ENCODE measurements at regions of chr5 and their contacts with region 1.

Region 1: GRCh38 chr5:34915139-34915855 is at the starts of genes BRIX1 and RAD1:
- DNase-seq: peak; percentile 92
- ATAC-seq: peak; percentile 99
- H3K4me3 ChIP-seq: peak within 1 kb of the TSS; percentile 83 to 99 (median 95)
- H3K27ac ChIP-seq: peak within 1 kb of the TSS; percentile 89
- H3K4me1 ChIP-seq: peaks cover 39% of the 10 kb centered on the region
- H3K27me3 ChIP-seq: no peaks in the 10 kb centered on the region; a peak in 1 of 5 replicates
- CTCF ChIP-seq: peak; percentile 54
- EP300 ChIP-seq: no peak; a peak in 1 of 4 replicates
- POLR2A ChIP-seq: peak; percentile 80 to 86
- RAD21 ChIP-seq: no peak
- total RNA-seq, gene BRIX1: 78.4 and 114 TPM in 2 replicates
- total RNA-seq, gene RAD1: 39.1 and 51.0 TPM in 2 replicates

Region 2: DNA sequence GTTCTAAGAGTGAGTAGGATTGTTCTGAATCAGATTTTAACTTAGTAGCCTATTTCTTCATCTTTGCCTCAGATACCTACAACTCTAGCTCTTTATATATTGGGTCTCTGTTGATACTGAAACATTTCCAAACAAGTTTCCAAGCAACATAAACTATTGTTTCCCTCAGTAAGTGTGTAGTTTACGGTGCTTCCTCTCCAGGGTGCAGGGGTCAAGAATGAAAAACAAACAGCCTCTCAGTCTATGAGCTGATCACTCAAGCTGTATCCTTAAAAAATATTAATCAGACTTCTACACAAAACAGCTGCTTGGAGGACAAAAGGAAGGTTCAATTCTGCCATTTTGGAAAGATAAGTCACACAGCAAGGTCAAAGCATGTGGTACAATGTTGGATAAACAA is 1098.5 kb before region 1 on chr5:
- CTCF ChIA-PET with region 1: no interaction called
- POLR2A ChIA-PET with region 1: no interaction called
- in situ Hi-C with region 1: no loop called
- intact Hi-C with region 1: no loop called
- DNase-seq: no peak
- ATAC-seq: no peak
- H3K4me3 ChIP-seq: no peak overlapping the region
- H3K27ac ChIP-seq: no peak overlapping the region
- H3K4me1 ChIP-seq: no peaks in the 10 kb centered on the region
- H3K27me3 ChIP-seq: no peaks in the 10 kb centered on the region
- CTCF ChIP-seq: no peak
- EP300 ChIP-seq: no peak
- POLR2A ChIP-seq: no peak
- RAD21 ChIP-seq: no peak

Region 3: DNA sequence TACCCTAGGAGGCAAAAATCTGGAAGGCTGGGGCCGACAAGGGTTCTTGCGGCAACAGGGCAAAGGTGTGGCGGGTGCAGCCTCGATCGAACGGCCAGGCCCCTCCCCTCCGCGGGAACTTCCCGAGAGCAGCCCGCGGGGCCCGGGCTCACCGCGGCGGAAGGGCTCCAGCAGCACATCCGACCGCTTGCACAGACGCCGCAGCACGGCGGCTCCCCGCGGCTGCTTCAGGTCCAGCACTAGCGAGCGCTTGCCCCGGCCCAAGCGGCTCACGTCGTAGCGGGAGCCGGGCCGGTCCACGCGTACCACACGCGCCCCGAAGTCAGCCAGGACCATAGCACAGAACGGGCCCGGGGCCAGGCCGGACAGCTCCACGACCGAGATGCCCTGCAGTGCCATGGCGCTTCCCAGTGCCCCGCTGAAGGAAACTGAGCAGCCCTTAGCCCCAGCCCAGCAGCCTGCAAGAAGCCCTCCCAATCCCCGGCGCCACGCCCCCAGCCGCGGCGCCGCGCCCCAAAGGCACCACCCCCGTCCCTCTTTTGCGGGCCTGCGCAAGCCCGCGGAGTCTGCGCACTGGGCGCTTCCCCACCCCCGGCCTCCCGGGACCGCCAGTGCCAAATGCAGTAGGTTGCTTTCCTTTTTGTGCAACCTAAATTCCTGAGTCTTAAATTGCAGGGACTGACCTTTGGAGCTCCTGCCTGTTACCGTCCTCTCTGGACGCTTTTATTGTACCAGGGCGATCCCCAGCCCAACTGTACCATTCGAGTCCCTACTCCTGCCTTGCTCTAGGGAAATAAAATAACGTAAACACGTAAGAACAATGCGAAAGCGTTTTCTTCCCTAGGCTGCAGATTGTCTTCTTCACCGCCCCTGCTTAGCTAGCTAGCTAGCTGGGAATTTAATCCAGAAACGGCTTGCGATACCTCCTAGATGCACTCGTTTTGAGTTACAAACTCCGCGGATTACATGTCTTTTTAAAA is 907.4 kb before region 1 on chr5 and contains the start of gene AMACR:
- CTCF ChIA-PET with region 1: no interaction called
- POLR2A ChIA-PET with region 1: no interaction called
- in situ Hi-C with region 1: no loop called
- intact Hi-C with region 1: loop called (anchors 2 kb)
- DNase-seq: peak; percentile 95
- ATAC-seq: peak; percentile 92
- H3K4me3 ChIP-seq: peak within 1 kb of the TSS; percentile 78 to 87 (median 86)
- H3K27ac ChIP-seq: peak within 1 kb of the TSS; percentile 99
- H3K4me1 ChIP-seq: peaks cover 51% of the 10 kb centered on the region
- H3K27me3 ChIP-seq: no peaks in the 10 kb centered on the region; a peak in 1 of 5 replicates
- CTCF ChIP-seq: peak; percentile 39
- EP300 ChIP-seq: peak in 1 of 2 experiments; percentile 61; a peak in 2 of 4 replicates
- POLR2A ChIP-seq: peak; percentile 94 to 98
- RAD21 ChIP-seq: peak; percentile 67
- total RNA-seq, gene AMACR: 19.7 and 27.7 TPM in 2 replicates

Region 4: GRCh38 chr5:34656001-34656699 is 259.1 kb before region 1 on chr5 and contains the start of gene RAI14:
- CTCF ChIA-PET with region 1: no interaction called
- POLR2A ChIA-PET with region 1: interaction called, 4 read pairs
- in situ Hi-C with region 1: no loop called
- intact Hi-C with region 1: loop called (anchors 5 kb)
- DNase-seq: peak; percentile 41
- ATAC-seq: peak; percentile 85
- H3K4me3 ChIP-seq: peak within 1 kb of the TSS; percentile 85 to 88 (median 87)
- H3K27ac ChIP-seq: peak within 1 kb of the TSS; percentile 44
- H3K4me1 ChIP-seq: peaks cover 25% of the 10 kb centered on the region
- H3K27me3 ChIP-seq: peaks cover 1 to 4% of the 10 kb centered on the region in 2 experiments; a peak in 3 of 5 replicates
- CTCF ChIP-seq: peak; percentile 45; the same call in 1 of the 2 replicates
- EP300 ChIP-seq: no peak
- POLR2A ChIP-seq: peak in 1 of 2 experiments; percentile 37; a peak in 1 of 4 replicates
- RAD21 ChIP-seq: peak; percentile 74
- total RNA-seq, gene RAI14: 18.2 and 26.6 TPM in 2 replicates

Region 5: GRCh38 chr5:34838785-34839714 is 76.2 kb before region 1 on chr5 and contains the start of gene TTC23L:
- CTCF ChIA-PET with region 1: no interaction called
- POLR2A ChIA-PET with region 1: interaction called, 16 read pairs
- in situ Hi-C with region 1: no loop called
- intact Hi-C with region 1: no loop called
- DNase-seq: peak; percentile 96
- ATAC-seq: peak; percentile 97
- H3K4me3 ChIP-seq: peak within 1 kb of the TSS; percentile 67 to 76 (median 74)
- H3K27ac ChIP-seq: peak within 1 kb of the TSS; percentile 84
- H3K4me1 ChIP-seq: peaks cover 23% of the 10 kb centered on the region
- H3K27me3 ChIP-seq: no peaks in the 10 kb centered on the region
- CTCF ChIP-seq: peak; percentile 41
- EP300 ChIP-seq: peak; percentile 42 to 48; a peak in 3 of 4 replicates
- POLR2A ChIP-seq: peak; percentile 94 to 96
- RAD21 ChIP-seq: peak; percentile 66; the same call in 1 of the 2 replicates
- total RNA-seq, gene TTC23L: 1.1 and 1.4 TPM in 2 replicates

Region 6: DNA sequence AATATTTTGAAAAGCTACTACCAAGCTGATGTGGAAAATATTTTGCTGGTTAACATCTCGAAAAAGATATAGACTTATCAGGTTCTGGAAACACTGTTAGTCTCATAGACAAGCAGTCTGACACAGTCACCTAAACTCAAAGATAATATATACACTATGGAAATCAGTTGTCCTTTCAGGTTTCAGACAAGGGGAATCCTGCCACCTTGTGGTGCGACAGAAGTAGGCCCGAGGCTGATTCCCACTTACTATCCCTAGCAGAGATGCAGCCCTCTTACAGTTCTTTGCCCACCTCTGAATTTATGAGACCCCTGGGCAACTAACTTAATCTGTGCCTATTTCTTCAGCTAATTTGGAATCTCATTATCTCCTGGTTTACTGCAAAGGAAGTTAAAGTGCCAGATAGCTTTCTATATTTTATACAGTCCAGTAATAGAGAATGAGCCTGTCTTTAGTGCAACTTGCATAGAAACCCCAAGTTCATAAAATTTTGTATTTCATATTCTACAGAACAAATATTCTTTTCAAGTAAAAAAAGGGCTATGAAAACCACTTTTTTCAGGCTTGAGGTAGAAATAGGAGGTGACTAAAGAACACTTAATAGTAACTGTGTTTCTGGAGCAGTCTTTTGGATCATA is 16.9 kb before region 1 on chr5:
- CTCF ChIA-PET with region 1: interaction called, 3 read pairs
- POLR2A ChIA-PET with region 1: interaction called, 17 read pairs
- in situ Hi-C with region 1: no loop called
- intact Hi-C with region 1: no loop called
- DNase-seq: peak; percentile 56
- ATAC-seq: peak; percentile 95
- H3K4me3 ChIP-seq: no peak overlapping the region
- H3K27ac ChIP-seq: no peak overlapping the region
- H3K4me1 ChIP-seq: peaks cover 6% of the 10 kb centered on the region
- H3K27me3 ChIP-seq: no peaks in the 10 kb centered on the region
- CTCF ChIP-seq: peak; percentile 88
- EP300 ChIP-seq: no peak
- POLR2A ChIP-seq: no peak
- RAD21 ChIP-seq: peak; percentile 88

Region 7: DNA sequence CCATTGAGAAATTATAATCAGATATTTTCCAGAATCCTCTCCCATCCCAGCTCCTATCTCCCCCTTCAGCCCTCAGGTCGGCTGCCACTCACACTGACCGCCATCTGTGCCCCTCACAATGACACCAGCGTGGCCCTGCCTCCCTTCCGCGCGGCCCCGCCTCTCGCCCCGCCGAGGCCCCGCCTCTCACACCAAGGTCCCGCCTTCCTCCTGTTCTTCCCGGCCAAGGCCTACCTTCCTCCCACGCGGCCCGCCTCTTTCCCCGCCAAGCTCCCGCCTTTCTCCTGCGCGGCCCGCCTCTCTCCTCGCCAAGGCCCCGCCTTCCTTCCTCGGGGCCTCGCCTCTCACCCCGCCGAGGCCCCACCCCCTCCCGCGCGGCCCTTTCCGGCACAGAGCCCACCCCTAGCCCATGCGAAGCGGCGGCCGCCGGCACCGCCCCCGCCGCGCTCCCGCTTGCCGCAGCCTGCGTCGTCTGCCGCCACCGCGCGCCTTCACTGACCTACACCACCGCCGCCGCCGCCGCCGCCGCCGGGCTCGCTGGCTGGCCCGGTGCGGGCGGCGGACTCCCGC is 13.9 kb after region 1 on chr5 and contains the start of gene DNAJC21:
- CTCF ChIA-PET with region 1: no interaction called
- POLR2A ChIA-PET with region 1: interaction called, 92 read pairs
- in situ Hi-C with region 1: no loop called
- intact Hi-C with region 1: loop called (anchors 2 kb)
- DNase-seq: peak; percentile 92
- ATAC-seq: peak; percentile 93
- H3K4me3 ChIP-seq: peak within 1 kb of the TSS; percentile 91 to 99 (median 96)
- H3K27ac ChIP-seq: peak within 1 kb of the TSS; percentile 92
- H3K4me1 ChIP-seq: peaks cover 19% of the 10 kb centered on the region
- H3K27me3 ChIP-seq: no peaks in the 10 kb centered on the region; a peak in 1 of 5 replicates
- CTCF ChIP-seq: no peak
- EP300 ChIP-seq: no peak
- POLR2A ChIP-seq: peak; percentile 49 to 59; a peak in 3 of 4 replicates
- RAD21 ChIP-seq: 0 out of 2 replicates have a peak, but pooled peaks have one; percentile 4
- total RNA-seq, gene DNAJC21: 41.6 and 46.4 TPM in 2 replicates

Measured in HepG2 (cell line).